ENCODE measurements at regions of chr15 and their contacts with region 1.

Region 1: DNA sequence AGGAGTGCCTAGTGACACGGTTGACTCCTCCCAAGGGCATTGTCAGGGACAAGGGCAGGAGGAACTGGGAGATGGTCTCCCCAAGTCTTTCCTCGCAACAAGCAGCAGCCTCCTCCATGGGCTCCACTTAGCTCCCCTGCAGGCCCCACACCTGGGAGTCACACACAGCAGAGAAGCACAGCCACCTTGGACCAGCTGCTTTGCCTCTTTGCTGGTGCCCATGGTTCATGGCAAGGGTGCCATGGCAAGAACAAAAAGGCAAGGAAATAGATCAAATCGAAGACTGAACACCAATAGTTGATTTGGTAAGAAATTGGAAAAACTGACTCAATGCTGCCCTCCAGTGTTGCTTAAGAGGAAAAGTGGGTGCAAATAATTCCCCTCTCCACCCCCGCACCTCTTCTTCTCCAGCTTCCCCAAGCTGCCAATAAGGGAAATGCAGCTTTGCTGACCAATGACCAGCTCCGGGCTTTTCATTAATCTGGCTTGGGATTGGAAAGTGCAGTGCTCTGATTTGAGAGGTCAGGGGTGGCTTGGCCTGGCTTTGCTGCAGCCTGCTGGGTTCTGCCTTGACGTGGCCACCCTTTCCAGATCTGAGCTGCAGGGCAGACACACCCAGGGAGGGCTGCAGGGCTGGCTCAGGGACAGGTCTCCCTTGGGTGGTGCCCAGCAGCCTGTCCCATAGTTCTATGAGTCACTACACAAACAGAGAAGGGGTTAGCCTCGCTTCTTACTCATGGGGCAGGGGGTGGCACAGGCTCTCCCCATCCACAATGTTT is 162.0 kb downstream of the KLF13 start:
- DNase-seq: peak; percentile 57
- H3K4me3 Mint-ChIP-seq: no peak overlapping the region
- H3K27ac Mint-ChIP-seq: no peak overlapping the region
- H3K4me1 Mint-ChIP-seq: peaks cover 23% of the 10 kb centered on the region
- H3K27me3 Mint-ChIP-seq: no peaks in the 10 kb centered on the region

Region 2: DNA sequence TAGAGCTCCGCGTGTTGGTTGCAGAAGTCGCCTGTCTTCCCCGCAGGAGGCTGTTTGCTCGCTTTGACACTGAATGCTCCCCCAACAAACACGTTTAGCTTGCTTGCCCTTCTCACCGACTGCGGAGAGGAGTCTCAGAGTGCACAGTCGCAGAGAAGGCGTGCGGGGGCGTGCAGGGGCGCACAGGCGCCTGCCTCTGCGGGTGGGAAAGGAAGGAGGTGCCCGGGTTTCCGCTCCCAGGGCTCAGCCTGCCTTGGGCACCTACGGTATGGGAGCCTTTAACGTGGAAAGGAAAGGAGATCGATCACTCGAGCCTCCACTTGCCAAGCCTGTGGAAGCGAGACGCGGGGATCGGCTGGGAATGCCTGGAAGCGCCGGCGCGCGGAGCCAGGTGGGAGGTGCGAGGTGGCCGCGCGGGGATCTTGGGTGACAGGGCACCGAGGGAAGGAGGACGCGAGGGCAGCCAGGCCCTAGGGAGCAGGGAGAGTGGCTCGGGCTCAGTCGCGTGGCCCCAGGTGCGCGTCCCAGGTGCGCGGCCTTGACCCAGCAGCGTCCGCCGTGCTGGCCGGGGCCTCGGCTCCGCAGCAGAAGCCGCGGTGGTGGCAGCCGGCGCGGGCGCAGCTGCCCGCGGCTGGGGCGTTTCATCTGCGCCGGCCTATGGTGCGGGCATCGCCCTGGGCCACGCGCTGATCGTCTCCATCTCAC is 585.0 kb before region 1 on chr15 and contains the start of gene FAN1:
- CTCF ChIA-PET with region 1: no interaction called
- intact Hi-C with region 1: loop called (anchors 5 kb)
- DNase-seq: peak; percentile 89
- H3K4me3 Mint-ChIP-seq: peak within 1 kb of the TSS; percentile 86
- H3K27ac Mint-ChIP-seq: peak within 1 kb of the TSS; percentile 74
- H3K4me1 Mint-ChIP-seq: peaks cover 30% of the 10 kb centered on the region
- H3K27me3 Mint-ChIP-seq: no peaks in the 10 kb centered on the region
- total RNA-seq, gene FAN1: 13.8 to 14.5 TPM

Region 3: DNA sequence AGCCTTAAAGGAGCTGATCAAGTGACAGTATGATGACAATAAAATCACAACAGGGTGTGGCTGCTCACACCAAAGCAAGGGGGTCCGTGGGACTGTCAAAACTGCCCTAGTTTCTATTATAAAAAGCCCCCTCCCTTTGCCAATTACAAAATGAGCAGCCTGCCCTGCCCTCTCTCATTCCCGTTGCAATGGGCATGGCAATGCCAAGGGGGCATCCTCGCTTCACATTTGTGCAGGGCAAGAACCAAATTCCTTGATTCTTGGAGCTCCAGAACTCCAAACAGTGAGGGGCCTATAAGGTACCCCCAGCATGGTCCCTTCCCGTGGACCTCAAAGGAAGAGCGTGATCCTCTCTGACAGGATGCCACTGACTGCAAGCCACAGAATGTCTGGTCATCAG is 282.2 kb before region 1 on chr15:
- CTCF ChIA-PET with region 1: interaction called, 37 read pairs
- intact Hi-C with region 1: no loop called
- DNase-seq: no peak
- H3K4me3 Mint-ChIP-seq: no peak overlapping the region
- H3K27ac Mint-ChIP-seq: no peak overlapping the region
- H3K4me1 Mint-ChIP-seq: peaks cover 32% of the 10 kb centered on the region
- H3K27me3 Mint-ChIP-seq: no peaks in the 10 kb centered on the region

Region 4: DNA sequence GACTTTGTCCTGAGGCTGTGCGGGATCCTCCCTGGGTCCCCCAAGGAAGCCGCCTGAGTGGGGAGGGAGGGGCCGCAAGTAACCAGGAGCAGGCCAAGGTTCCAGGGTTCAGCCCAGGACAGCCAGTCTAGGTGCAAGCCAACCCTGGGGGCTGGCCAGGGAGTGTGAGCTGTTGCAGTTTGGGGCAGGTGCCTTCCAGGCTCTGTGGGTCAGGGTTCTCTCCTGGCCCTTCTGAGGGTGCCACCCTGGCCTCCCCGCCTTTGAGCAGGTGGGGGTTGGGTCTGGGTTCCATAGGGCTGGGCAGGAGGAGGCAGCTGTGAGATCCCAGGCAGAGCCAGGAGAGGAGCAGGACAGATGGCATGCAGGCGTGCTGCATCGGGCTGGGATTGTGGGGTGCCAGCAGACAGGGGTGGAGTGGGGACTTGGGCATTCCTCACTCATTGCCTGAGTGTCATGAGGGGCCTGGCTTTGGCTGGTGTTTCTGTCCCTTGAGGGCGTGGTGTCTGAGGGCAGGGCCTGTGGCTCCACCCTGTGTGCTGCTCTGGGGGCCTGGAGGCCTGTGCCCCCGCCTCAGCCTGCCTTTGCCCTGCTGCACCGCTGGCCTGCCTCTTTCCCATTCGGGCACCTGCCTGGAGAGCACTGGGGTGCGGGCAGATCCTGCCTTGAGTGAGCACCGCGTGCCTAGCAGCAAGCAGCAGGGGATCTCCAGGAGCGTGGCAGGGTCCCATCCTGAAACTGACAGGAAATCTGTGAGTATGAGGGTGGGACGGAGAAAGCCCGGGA is 143.6 kb before region 1 on chr15:
- CTCF ChIA-PET with region 1: interaction called, 5 read pairs
- intact Hi-C with region 1: loop called (anchors 2 kb)
- DNase-seq: peak; percentile 66
- H3K4me3 Mint-ChIP-seq: peak overlapping the region; percentile 92
- H3K27ac Mint-ChIP-seq: peak overlapping the region; percentile 99
- H3K4me1 Mint-ChIP-seq: peaks cover 98% of the 10 kb centered on the region
- H3K27me3 Mint-ChIP-seq: no peaks in the 10 kb centered on the region

Region 5: GRCh38 chr15:31458591-31459399 is 29.8 kb before region 1 on chr15:
- CTCF ChIA-PET with region 1: interaction called, 28 read pairs
- intact Hi-C with region 1: loop called (anchors 1 kb)
- DNase-seq: peak; percentile 86
- H3K4me3 Mint-ChIP-seq: peak overlapping the region; percentile 57
- H3K27ac Mint-ChIP-seq: peak overlapping the region; percentile 87
- H3K4me1 Mint-ChIP-seq: peaks cover 37% of the 10 kb centered on the region
- H3K27me3 Mint-ChIP-seq: no peaks in the 10 kb centered on the region

Region 6: DNA sequence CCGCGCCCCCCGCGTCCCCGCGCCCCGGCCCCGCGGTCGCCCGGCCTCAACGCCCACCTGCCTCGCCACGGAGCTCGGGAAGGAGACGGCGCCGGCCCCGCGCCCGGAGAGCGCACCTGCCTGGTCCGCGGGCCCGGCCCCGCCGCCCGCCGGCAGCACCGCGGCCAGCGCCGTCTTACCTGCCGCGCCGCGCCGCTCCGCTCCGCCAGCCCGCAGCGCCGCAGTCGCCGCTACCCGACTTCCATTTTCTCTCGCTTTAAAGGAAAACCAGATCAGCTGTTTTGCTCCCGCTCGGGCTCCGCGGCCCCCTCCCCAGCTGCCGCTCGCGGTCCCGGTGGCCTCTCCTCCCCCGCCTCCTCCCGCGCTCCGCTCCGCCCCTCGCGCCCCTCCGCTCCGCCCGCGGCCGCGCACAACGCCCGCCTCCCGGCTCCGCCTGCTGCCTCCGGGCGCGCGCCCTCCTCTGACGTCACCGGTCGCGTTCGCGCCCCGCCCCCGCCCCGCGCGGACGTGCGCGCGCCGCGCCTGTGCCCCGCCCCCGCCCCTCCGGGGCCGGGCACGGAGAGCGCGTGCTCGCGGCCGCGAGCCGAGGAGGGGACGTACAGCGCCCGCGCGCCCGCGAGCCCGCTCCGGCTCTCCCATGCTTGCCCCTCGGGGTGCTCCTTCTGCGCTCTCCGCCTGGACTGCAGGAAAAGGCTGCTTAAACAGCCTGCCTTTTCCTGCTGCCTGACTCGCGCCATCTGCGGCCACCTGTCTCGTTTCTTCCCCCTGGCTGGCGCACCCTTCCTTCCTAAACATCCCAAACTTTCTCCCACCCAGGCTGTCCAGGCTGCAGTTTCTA is 381.9 kb after region 1 on chr15:
- CTCF ChIA-PET with region 1: no interaction called
- intact Hi-C with region 1: loop called (anchors 10 kb)
- DNase-seq: peak; percentile 78
- H3K4me3 Mint-ChIP-seq: peak within 1 kb of the TSS; percentile 87
- H3K27ac Mint-ChIP-seq: peak within 1 kb of the TSS; percentile 80
- H3K4me1 Mint-ChIP-seq: peaks cover 9% of the 10 kb centered on the region
- H3K27me3 Mint-ChIP-seq: peaks cover 8% of the 10 kb centered on the region

Measured in activated naive CD4-positive, alpha-beta T cell treated with anti-CD3 and anti-CD28 coated beads for 36 hours (primary cell).